Heart right ventricle (tissue), 16 donors: ENCODE measurements at regions of chr17 and their contacts with region 1.

Region 1: GRCh38 chr17:74736513-74737298 is at the start of gene RAB37:
- DNase-seq: peak in 1 of 2 donors; percentile 62
- ATAC-seq: peak; percentile 31 to 68 (median 50)
- H3K4me3 ChIP-seq: peak within 1 kb of the TSS; percentile 1 to 60 (median 40)
- H3K27ac ChIP-seq: peak within 1 kb of the TSS in 7 of 10 donors; percentile 37 to 87 (median 50)
- H3K4me1 ChIP-seq: peaks cover 7 to 58% (median 23%) of the 10 kb centered on the region in 9 donors
- H3K27me3 ChIP-seq: peaks cover 0 to 74% (median 59%) of the 10 kb centered on the region in 7 donors
- CTCF ChIP-seq: peak in 8 of 9 donors; percentile 6 to 63 (median 54)
- total RNA-seq, gene RAB37: 0.95 to 2.8 (median 1.6) TPM

Region 2: DNA sequence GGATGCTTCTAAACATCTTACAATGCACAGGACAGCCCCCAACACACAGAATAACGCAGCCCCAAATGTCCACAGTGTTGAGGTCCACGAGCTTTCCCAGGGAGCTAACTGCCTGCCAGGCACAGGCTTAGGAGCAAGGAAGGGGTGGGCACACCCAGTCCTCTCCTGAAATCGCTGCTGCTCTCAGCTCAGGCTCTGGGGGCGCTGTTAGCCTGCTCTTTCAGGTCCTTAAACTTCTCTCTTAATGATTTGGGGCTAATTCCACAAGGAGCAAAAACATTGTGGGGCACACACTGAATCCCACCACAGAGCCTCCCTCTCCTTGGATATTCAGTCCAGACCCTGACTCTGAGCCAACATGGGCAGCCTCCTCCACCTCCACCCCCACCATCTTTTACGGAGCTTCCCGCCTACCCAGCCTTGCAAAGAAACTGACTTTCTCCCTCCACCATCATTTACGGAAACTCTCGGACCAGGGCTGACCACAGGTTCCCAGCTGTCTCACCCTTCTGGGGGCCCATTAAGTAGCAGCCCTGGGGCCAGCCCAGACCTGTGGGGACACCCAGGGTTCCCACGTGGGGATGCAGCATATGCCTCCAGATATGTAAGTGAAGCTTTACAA is 170.5 kb before region 1 on chr17:
- intact Hi-C with region 1: loop called in 2 of 10 experiments (anchors 5 to 10 kb)
- DNase-seq: no peak
- ATAC-seq: peak in 1 of 8 donors; percentile 47
- H3K4me3 ChIP-seq: peak overlapping the region in 1 of 10 donors; percentile 23
- H3K27ac ChIP-seq: peak overlapping the region in 1 of 10 donors; percentile 79
- H3K4me1 ChIP-seq: peaks cover 0 to 40% (median 0%) of the 10 kb centered on the region in 9 donors
- H3K27me3 ChIP-seq: peaks cover 0 to 41% (median 15%) of the 10 kb centered on the region in 7 donors
- CTCF ChIP-seq: peak; percentile 11 to 66 (median 45)

Region 3: DNA sequence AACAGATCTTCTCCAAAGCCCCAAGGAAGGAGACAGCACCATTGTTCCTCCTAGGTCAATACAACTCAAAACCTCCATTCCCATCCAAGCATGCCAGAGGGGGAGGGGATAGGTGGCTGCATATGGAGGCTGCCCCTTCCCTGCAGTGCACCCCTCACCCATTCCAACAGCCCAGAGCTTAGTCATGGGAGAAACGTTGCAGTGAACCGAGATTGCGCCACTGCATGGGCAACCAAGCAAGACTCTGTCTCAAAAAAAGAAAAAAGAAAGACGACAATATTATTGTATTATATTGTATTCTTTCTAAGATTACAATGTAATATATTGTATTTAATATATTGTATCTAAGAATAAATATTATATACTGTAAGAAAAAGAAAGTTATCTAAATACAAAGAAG is 76.8 kb before region 1 on chr17:
- intact Hi-C with region 1: loop called in 9 of 10 experiments (anchors 2 to 10 kb)
- DNase-seq: no peak
- ATAC-seq: no peak
- H3K4me3 ChIP-seq: no peak overlapping the region
- H3K27ac ChIP-seq: no peak overlapping the region
- H3K4me1 ChIP-seq: peaks cover 0 to 4% (median 0%) of the 10 kb centered on the region in 9 donors
- H3K27me3 ChIP-seq: peaks cover 5 to 85% (median 49%) of the 10 kb centered on the region in 7 donors
- CTCF ChIP-seq: no peak